ENCODE measurements at regions of chr10 and their contacts with region 1.

Region 1: GRCh38 chr10:13016426-13016825 is 14.9 kb upstream of the CCDC3 start:
- DNase-seq: no peak
- H3K4me3 ChIP-seq: no peak overlapping the region
- H3K27ac ChIP-seq: no peak overlapping the region
- H3K4me1 ChIP-seq: no peaks in the 10 kb centered on the region
- H3K27me3 ChIP-seq: no peaks in the 10 kb centered on the region
- CTCF ChIP-seq: no peak
- POLR2A ChIP-seq: no peak

Region 2: DNA sequence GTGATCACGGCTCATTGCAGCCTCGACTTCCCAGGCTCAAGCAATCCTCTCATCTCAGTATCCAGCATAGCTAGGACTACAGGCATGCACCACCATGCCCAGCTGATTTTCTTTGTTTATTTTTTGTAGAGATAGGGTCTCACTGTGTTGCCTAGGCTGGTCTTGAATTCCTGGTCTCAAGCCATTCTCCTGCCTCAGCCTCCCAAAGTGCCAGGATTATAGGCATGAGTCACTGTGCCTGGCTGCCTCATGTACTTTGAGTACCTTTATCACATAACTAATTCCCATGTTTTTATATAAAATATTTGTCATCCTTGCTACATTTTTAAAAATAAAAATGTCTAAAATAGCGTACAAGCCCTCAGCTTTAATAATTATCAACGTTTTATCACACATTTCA is 20.4 kb after region 1 on chr10:
- intact Hi-C with region 1: loop called (anchors 2 kb)
- DNase-seq: no peak
- H3K4me3 ChIP-seq: no peak overlapping the region
- H3K27ac ChIP-seq: no peak overlapping the region
- H3K4me1 ChIP-seq: no peaks in the 10 kb centered on the region
- H3K27me3 ChIP-seq: no peaks in the 10 kb centered on the region
- CTCF ChIP-seq: no peak
- POLR2A ChIP-seq: no peak